ENCODE measurements at regions of chr10 and their contacts with region 1.

Region 1: DNA sequence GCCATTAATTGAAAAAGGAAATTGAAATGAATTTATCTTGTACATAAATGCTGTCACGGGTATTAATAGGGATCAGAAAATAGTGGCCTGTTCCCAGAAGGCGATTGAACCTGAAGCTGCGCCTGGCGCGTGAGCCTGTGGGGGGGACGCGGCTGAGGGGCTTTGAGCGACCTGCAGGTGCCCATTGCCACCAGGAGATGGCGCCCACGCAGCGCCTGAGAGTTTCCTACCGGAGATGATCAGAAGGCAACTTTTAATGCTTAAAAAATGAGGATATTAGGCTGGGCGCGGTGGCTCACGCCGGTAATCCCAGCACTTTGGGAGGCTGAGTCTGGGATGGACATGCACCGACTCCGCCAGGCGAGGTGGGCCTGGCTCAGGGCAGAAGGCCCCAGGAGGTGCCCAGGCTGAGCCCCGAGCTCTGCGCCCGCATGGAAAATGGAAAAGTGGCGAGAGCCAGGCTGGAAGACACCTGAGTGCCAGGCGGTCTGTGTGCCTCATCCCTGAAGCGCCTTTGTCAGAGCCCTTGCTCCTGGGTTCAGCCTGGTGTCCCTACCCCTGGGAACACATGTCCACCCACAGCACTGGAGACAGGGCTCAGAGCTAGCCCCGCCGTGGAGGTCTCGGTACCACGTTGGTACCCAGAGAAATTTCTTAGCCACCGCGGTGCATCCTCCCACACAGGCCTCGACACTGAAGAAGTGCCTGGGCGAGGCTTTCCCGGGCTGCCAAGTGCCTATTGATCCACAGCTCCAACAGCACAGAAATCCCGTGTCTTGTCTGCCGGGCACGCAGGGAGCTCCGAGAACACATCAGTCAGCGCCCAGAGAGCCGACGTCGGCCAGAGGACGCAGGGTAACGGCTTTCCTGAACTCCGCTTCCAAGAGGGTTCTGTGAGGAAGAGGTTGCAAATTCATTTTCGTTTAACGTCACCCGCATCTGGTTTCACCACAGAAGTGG is 117.4 kb downstream of the INPP5A start:
- DNase-seq: no peak
- H3K4me3 Mint-ChIP-seq: no peak overlapping the region
- H3K27ac Mint-ChIP-seq: no peak overlapping the region
- H3K4me1 Mint-ChIP-seq: no peaks in the 10 kb centered on the region
- H3K27me3 Mint-ChIP-seq: no peaks in the 10 kb centered on the region

Region 2: DNA sequence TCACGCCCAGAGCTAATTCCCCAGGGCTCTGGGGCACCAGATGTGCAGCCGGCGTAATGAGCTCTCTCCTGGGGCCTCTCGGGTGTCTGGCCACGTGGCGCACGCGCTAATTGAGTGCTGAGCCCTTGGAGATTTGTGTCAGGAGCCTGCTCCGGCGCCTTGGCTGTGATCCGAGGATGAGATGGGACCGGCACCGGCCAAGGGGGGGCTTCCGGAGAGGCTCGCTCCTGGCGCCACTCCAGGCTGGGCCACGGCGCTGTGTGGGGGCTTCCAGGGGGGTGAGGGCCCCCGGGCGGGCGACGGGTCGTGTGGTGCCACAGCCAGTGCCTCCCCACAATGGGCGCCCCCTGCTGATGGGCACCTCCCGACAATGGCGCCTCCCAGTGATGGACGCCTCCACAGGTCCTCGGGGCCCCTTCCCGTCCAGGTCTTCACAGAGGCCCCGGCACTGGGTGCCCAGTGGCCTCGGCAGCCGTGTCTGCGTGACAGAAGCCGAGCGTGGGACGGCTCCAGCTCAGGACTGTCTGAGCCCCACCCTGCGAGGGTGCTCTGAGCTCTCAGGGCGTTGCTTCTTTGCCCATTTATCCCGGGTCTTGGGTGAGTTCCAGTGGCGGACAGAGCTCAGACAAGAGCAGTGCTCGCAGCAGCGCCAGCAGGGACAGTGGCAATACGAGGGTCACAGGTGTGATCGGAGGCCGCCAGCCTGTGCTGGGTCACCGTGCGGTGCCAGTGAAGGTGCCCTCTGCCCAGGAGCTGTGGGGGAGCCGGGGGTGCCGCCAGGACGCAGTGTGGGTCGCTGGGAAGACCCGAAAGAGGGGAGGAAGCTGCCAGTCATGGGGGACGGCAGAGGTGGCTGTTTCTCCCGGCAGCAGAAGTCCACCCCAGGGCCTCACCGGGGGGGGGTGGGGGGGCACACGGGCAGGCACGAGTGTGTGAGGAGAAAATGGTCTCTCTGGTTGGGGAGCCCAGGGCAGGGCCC is 139.2 kb after region 1 on chr10:
- intact Hi-C with region 1: loop called (anchors 10 kb)
- DNase-seq: no peak
- H3K4me3 Mint-ChIP-seq: no peak overlapping the region
- H3K27ac Mint-ChIP-seq: no peak overlapping the region
- H3K4me1 Mint-ChIP-seq: no peaks in the 10 kb centered on the region
- H3K27me3 Mint-ChIP-seq: peaks cover 5% of the 10 kb centered on the region

Measured in activated T-helper 1 cell treated with anti-CD3 and anti-CD28 coated beads, Interleukin-12 subunit alpha, Interleukin-12 subunit beta, Interleukin-2, Interleukin-4 antibody, amounts not matched to agents 30 ng/mL and 10 ng/mL and 1 ng/mL, durations not matched to agents 14 hours and 24 hours and 36 hours (primary cell).